Calu3 (cell line): ENCODE measurements at regions of chr3 and their contacts with region 1.

Region 1: DNA sequence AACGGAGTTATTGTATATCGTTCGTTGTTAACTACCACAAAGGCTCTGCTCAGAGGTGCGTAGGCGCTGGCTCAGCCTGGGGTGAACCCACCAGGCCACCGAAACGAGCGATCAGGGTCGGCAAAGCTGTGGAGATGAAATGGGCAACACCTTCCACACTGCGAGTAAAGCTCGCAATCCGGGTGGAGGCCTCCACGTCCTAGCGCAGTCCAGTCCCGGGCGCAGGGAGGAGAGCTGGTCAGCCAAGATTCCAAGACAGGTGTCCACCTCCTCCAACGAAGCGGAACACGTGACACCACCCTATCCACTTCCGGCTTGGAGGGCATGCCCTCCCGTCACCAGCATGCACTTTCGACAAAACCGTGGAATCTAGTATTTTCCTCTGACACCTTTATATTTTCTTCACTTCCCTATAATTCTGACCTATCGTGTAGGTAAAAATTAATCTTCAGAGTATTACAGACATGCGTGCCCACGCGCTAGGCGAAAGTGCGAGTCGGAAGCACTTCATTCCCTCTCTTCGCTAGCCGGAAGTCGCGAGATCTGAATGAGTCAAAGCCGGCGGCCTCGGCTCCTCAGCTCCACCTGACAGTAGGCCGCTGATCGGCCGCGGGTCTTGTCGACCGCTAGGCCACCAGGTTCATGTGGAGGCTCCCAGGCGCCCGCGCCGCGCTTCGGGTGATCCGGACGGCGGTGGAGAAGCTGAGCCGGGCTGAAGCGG is at the start of gene PDE12:
- DNase-seq: peak; percentile 86
- H3K4me3 Mint-ChIP-seq: peak within 1 kb of the TSS; percentile 58
- H3K27ac Mint-ChIP-seq: peak within 1 kb of the TSS; percentile 95
- H3K4me1 Mint-ChIP-seq: no peaks in the 10 kb centered on the region
- H3K27me3 Mint-ChIP-seq: no peaks in the 10 kb centered on the region
- CTCF ChIP-seq: no peak
- total RNA-seq, gene PDE12: 27.4 and 32.4 TPM in 2 replicates

Region 2: GRCh38 chr3:57464801-57465200 is 91.1 kb before region 1 on chr3:
- CTCF ChIA-PET with region 1: interaction called, 3 read pairs
- intact Hi-C with region 1: loop called (anchors 10 kb)
- DNase-seq: no peak
- H3K4me3 Mint-ChIP-seq: no peak overlapping the region
- H3K27ac Mint-ChIP-seq: no peak overlapping the region
- H3K4me1 Mint-ChIP-seq: no peaks in the 10 kb centered on the region
- H3K27me3 Mint-ChIP-seq: no peaks in the 10 kb centered on the region
- CTCF ChIP-seq: no peak

Region 3: GRCh38 chr3:57864853-57865252 is 309.0 kb after region 1 on chr3:
- CTCF ChIA-PET with region 1: no interaction called
- intact Hi-C with region 1: no loop called
- DNase-seq: no peak
- H3K4me3 Mint-ChIP-seq: no peak overlapping the region
- H3K27ac Mint-ChIP-seq: no peak overlapping the region
- H3K4me1 Mint-ChIP-seq: no peaks in the 10 kb centered on the region
- H3K27me3 Mint-ChIP-seq: no peaks in the 10 kb centered on the region
- CTCF ChIP-seq: peak; percentile 10